Ascending aorta (tissue), 2 donors: ENCODE measurements at regions of chr7 and their contacts with region 1.

Region 1: GRCh38 chr7:101815835-101816493 is 1.5 kb upstream of the CUX1 start:
- DNase-seq: peak in 1 of 2 donors; percentile 82
- H3K4me3 ChIP-seq: peak overlapping the region; percentile 65 to 90
- H3K27ac ChIP-seq: peak overlapping the region; percentile 65 to 88
- H3K4me1 ChIP-seq: peaks cover 0 to 17% of the 10 kb centered on the region in 2 donors
- H3K27me3 ChIP-seq: no peaks in the 10 kb centered on the region
- CTCF ChIP-seq: no peak

Region 2: GRCh38 chr7:101542527-101543241 is 273.3 kb before region 1 on chr7:
- intact Hi-C with region 1: loop called (anchors 5 kb)
- DNase-seq: peak in 1 of 2 donors; percentile 80
- H3K4me3 ChIP-seq: no peak overlapping the region
- H3K27ac ChIP-seq: no peak overlapping the region
- H3K4me1 ChIP-seq: peaks cover 0 to 4% of the 10 kb centered on the region in 2 donors
- H3K27me3 ChIP-seq: no peaks in the 10 kb centered on the region
- CTCF ChIP-seq: peak; percentile 86 to 98 (median 88)

Region 3: DNA sequence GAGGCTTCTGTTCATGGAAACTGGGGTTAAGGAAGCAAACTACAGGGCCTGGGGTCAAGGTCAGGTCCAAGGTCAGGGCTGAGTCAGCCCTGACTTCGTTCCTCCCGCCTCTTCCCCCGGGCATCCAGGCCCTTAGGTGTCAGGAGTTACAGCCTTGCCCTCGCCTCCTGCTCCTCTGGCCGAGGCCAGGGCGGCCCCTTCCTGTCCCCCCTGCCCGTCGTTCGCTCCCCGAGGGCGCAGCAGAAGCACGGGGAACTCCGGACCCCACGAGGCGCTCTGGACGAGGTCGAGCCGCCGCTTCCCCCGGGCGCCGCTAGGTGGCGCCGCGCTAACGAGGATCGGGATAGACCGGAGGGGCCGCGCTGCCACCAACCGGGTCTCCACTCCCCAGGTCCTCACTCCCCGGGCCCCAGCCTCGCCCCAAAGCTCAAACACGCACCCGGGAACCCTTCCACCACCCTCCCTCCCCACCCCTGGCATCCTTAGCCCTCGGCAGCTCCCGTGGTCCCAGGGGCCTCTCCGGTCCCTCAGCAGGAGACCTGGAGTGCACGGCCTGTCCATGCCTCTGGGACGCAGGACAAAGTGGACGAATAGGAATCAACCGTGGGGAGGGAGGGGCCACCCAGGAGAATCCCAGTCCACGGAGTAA is 127.7 kb before region 1 on chr7:
- intact Hi-C with region 1: loop called (anchors 2 kb)
- DNase-seq: peak in 1 of 2 donors; percentile 87
- H3K4me3 ChIP-seq: peak overlapping the region; percentile 11 to 49
- H3K27ac ChIP-seq: no peak overlapping the region
- H3K4me1 ChIP-seq: peaks cover 0 to 6% of the 10 kb centered on the region in 2 donors
- H3K27me3 ChIP-seq: no peaks in the 10 kb centered on the region
- CTCF ChIP-seq: peak; percentile 94 to 98 (median 97)

Region 4: DNA sequence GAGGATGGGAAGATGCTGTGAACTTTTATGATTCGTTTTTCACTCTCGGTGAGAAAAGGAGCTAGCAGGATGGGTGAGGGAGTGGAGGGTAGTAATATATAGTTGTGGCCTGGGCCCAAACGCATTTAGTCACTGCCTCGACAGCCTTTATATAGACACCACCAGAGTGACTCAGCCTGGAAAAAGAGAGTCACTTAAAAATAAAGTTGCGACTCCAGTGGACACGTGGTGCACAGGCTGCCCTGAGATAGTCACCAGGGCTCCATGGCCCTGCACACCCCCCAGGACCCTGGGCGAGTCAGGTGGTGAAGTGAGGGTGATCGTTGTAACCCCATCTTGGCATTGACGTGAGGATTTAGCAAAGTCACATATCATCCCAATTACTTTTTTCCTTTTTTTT is 108.2 kb after region 1 on chr7:
- intact Hi-C with region 1: loop called (anchors 2 kb)
- DNase-seq: peak; percentile 65 to 93
- H3K4me3 ChIP-seq: peak overlapping the region in 1 of 2 donors; percentile 56
- H3K27ac ChIP-seq: peak overlapping the region; percentile 89 to 95
- H3K4me1 ChIP-seq: peaks cover 7 to 25% of the 10 kb centered on the region in 2 donors
- H3K27me3 ChIP-seq: no peaks in the 10 kb centered on the region
- CTCF ChIP-seq: no peak

Region 5: DNA sequence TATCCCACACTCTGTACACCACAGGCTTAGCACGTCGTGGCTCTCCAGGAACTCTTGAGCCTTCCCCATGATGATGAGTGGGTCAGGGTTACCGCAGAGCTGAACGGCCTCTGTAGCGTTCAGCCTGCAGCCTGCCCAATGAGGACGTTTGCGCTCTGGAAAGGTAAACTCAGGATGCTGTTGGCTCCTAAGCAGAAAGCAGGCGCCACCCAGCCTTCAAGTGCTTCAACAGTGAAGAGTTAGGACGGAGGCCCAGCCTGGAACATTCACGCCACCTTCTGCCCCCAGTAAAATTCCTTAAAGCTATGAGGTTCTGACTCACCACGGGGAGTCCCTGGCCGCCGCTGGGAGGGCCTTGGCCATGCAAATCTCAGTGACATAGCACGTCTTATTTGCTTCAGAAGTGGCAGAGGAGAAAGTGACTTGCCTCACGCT is 309.2 kb after region 1 on chr7:
- intact Hi-C with region 1: loop called (anchors 2 kb)
- DNase-seq: peak; percentile 68 to 92
- H3K4me3 ChIP-seq: no peak overlapping the region
- H3K27ac ChIP-seq: peak overlapping the region; percentile 70 to 74
- H3K4me1 ChIP-seq: peaks cover 0 to 14% of the 10 kb centered on the region in 2 donors
- H3K27me3 ChIP-seq: no peaks in the 10 kb centered on the region
- CTCF ChIP-seq: peak in 2 of 3 experiments; percentile 23 to 40